Adrenal gland (tissue), 19 donors: ENCODE measurements at regions of chr15 and their contacts with region 1.

Region 1: DNA sequence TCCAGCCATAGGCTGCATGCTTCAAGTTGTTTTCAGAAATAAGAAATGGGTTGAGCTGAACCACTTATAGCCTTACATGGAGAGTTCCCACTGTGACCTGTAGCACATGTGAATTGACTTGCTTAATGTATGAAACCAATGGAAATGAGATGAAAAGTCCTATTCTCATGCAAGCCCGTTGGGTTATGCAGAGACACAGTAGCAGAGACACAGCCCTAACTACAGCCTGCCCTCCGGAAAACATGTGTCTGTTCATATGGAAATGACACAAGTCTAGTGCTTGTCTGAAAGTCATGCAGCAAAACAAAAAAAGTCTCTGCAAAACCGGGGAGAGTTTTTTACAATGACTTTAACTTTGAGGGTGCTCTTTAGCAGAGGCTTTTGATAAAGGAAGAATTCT is 14.4 kb downstream of the HIGD2B start:
- DNase-seq: no peak
- H3K4me3 ChIP-seq: no peak overlapping the region
- H3K27ac ChIP-seq: no peak overlapping the region
- H3K4me1 ChIP-seq: no peaks in the 10 kb centered on the region
- H3K27me3 ChIP-seq: no peaks in the 10 kb centered on the region
- CTCF ChIP-seq: no peak
- POLR2A ChIP-seq: no peak

Region 2: DNA sequence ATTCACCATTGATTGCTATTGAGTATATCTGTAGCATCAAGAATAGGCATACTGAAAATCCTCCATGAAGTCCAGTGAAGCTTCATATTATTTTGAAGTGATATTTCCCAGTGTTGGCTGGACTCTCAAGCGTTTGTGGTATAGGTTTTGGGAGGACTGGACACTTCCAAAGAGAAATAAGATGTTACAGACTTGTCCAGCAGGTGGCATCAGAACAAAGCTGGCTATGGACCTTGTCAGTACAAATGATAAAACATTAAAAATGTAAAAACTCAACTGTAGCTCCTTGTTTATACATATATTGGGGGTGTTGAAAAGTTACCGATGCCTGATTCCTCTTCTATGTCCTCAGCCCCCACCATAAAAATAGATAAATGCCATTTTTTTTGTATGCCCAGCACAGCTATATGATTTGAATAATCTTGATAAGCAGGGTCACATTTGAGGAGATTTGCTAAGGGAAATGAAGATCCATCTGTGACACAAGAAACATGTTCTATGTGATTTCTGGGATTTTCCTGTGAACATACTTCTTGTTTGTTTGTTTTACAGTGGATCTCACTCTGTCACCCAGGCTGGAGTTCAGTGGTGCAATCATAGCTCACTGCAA is 71.6 kb before region 1 on chr15:
- intact Hi-C with region 1: loop called in 1 of 2 experiments (anchors 10 kb)
- DNase-seq: peak in 5 of 7 donors; percentile 33 to 64 (median 41)
- H3K4me3 ChIP-seq: no peak overlapping the region
- H3K27ac ChIP-seq: no peak overlapping the region
- H3K4me1 ChIP-seq: no peaks in the 10 kb centered on the region
- H3K27me3 ChIP-seq: no peaks in the 10 kb centered on the region
- CTCF ChIP-seq: peak; percentile 48 to 66 (median 60)
- POLR2A ChIP-seq: no peak

Region 3: GRCh38 chr15:72732516-72732915 is 61.0 kb after region 1 on chr15:
- intact Hi-C with region 1: no loop called
- DNase-seq: no peak
- H3K4me3 ChIP-seq: no peak overlapping the region
- H3K27ac ChIP-seq: no peak overlapping the region
- H3K4me1 ChIP-seq: no peaks in the 10 kb centered on the region
- H3K27me3 ChIP-seq: no peaks in the 10 kb centered on the region
- CTCF ChIP-seq: no peak
- POLR2A ChIP-seq: no peak